ENCODE measurements at regions of chr12 and their contacts with region 1.

Region 1: DNA sequence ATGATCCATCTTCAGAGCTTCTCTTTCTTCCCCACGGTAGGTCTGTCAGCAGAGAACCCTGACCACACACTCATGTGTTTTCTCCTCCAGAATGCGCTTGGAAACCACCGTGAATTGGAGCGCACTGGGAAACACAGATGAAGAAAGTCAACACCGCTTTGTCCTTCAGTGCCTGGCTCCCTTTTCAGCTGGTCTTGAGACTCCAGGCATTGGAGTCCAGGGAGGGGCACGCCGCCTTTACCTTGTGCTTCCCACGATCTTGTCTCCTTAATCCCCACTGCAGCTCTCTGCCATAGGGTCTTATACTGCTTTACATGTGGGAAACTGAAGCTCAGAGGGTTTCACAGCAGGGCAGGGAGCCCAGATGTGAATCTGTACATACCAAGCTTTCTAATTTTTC is 1.1 kb downstream of the FAM90A1 start:
- DNase-seq: no peak
- ATAC-seq: no peak
- H3K4me3 ChIP-seq: no peak overlapping the region
- H3K27ac ChIP-seq: no peak overlapping the region
- H3K4me1 ChIP-seq: peaks cover 0 to 5% of the 10 kb centered on the region in 2 experiments; a peak in 1 of 4 replicates
- H3K27me3 ChIP-seq: no peaks in the 10 kb centered on the region
- CTCF ChIP-seq: no peak
- POLR2A ChIP-seq: no peak
- RAD21 ChIP-seq: no peak

Region 2: DNA sequence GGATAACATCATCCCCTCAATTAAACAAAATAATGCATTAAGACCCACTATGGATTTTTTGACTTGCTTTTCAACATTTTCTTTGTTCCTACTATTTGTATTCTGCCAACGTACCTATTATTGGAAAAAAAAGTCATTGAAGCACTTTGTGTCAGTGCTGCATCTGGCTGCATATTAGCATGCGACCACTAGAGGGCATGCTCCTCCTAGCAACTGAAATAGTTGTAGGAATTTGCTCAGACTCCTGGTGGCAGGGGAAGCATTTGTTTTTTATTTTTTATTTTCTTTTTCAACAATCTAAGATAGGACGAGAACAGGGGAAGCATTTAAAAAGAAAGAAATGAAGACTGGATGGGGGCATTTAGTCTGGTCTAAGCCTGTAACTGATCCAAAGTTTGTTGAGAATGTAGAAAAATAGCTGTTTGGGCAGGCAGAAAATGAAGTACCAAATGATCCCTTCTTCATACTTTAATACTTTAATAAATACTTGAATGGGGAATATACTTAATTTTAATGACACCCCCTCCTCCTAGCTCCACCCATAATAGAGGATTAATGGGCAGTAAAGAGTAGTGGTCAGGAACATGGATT is 117.5 kb before region 1 on chr12:
- CTCF ChIA-PET with region 1: interaction called, 27 read pairs
- POLR2A ChIA-PET with region 1: no interaction called
- RAD21 ChIA-PET with region 1: interaction called in 1 of 2 experiments, 4 read pairs
- intact Hi-C with region 1: no loop called
- DNase-seq: peak; percentile 63
- ATAC-seq: peak; percentile 84
- H3K4me3 ChIP-seq: no peak overlapping the region
- H3K27ac ChIP-seq: no peak overlapping the region
- H3K4me1 ChIP-seq: no peaks in the 10 kb centered on the region; a peak in 1 of 4 replicates
- H3K27me3 ChIP-seq: no peaks in the 10 kb centered on the region
- CTCF ChIP-seq: peak; percentile 97 to 100 (median 99)
- POLR2A ChIP-seq: no peak
- RAD21 ChIP-seq: peak; percentile 95

Region 3: DNA sequence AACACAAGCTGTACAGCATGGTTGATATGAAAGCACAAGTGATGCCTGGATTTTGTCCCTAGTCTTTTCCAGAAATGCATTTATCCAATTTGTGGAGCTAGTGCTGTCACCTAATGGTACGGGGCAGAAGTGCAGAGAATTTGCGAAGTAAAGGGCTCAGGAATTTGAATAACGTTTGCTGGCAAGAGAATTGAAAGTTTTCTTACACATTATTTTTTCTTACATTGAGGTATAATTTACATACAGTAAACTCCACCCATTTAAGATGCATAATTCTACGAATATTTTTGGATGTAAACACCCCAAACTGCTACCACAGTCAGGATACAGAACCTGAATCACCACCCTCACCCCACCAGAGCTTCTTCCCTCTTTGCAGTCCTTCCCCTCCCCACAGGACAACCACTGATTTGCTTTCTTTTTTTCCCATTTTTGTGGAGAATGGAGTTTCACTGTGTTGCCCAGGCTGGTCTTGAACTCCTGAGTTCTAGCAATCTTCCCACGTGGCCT is 382.8 kb after region 1 on chr12:
- CTCF ChIA-PET with region 1: no interaction called
- POLR2A ChIA-PET with region 1: no interaction called
- RAD21 ChIA-PET with region 1: no interaction called
- intact Hi-C with region 1: no loop called
- DNase-seq: peak; percentile 35
- ATAC-seq: peak; percentile 87
- H3K4me3 ChIP-seq: no peak overlapping the region
- H3K27ac ChIP-seq: no peak overlapping the region
- H3K4me1 ChIP-seq: no peaks in the 10 kb centered on the region
- H3K27me3 ChIP-seq: no peaks in the 10 kb centered on the region
- CTCF ChIP-seq: peak; percentile 64 to 86 (median 76)
- POLR2A ChIP-seq: no peak
- RAD21 ChIP-seq: peak; percentile 70